ENCODE measurements at regions of chr5 and their contacts with region 1.

Region 1: GRCh38 chr5:150106674-150107426 is 20.5 kb upstream of the CSF1R start:
- DNase-seq: peak in 1 of 4 experiments; percentile 5
- ATAC-seq: peak; percentile 18; the same call in 2 of the 3 replicates
- H3K4me3 ChIP-seq: no peak overlapping the region
- H3K27ac ChIP-seq: no peak overlapping the region
- H3K4me1 ChIP-seq: peaks cover 0 to 6% of the 10 kb centered on the region in 2 experiments; a peak in 2 of 5 replicates
- H3K27me3 ChIP-seq: peaks cover 0 to 4% of the 10 kb centered on the region in 2 experiments; a peak in 1 of 5 replicates
- CTCF ChIP-seq: no peak
- EP300 ChIP-seq: no peak
- POLR2A ChIP-seq: no peak
- RAD21 ChIP-seq: no peak

Region 2: GRCh38 chr5:150082889-150083288 is 24.0 kb before region 1 on chr5:
- CTCF ChIA-PET with region 1: no interaction called
- POLR2A ChIA-PET with region 1: interaction called, 3 read pairs
- in situ Hi-C with region 1: no loop called
- intact Hi-C with region 1: loop called (anchors 2 kb)
- DNase-seq: no peak
- ATAC-seq: no peak
- H3K4me3 ChIP-seq: no peak overlapping the region
- H3K27ac ChIP-seq: no peak overlapping the region
- H3K4me1 ChIP-seq: peaks cover 0 to 7% of the 10 kb centered on the region in 2 experiments; a peak in 1 of 5 replicates
- H3K27me3 ChIP-seq: peaks cover 43 to 83% of the 10 kb centered on the region in 2 experiments
- CTCF ChIP-seq: no peak
- EP300 ChIP-seq: no peak
- POLR2A ChIP-seq: no peak
- RAD21 ChIP-seq: no peak

Region 3: GRCh38 chr5:150918613-150919012 is 811.8 kb after region 1 on chr5:
- CTCF ChIA-PET with region 1: no interaction called
- POLR2A ChIA-PET with region 1: no interaction called
- in situ Hi-C with region 1: no loop called
- intact Hi-C with region 1: loop called (anchors 10 kb)
- DNase-seq: no peak
- ATAC-seq: no peak
- H3K4me3 ChIP-seq: no peak overlapping the region
- H3K27ac ChIP-seq: no peak overlapping the region
- H3K4me1 ChIP-seq: no peaks in the 10 kb centered on the region
- H3K27me3 ChIP-seq: no peaks in the 10 kb centered on the region
- CTCF ChIP-seq: no peak
- EP300 ChIP-seq: no peak
- POLR2A ChIP-seq: no peak
- RAD21 ChIP-seq: no peak

Measured in K562 (cell line).